ENCODE measurements at regions of chr9 and their contacts with region 1.

Region 1: DNA sequence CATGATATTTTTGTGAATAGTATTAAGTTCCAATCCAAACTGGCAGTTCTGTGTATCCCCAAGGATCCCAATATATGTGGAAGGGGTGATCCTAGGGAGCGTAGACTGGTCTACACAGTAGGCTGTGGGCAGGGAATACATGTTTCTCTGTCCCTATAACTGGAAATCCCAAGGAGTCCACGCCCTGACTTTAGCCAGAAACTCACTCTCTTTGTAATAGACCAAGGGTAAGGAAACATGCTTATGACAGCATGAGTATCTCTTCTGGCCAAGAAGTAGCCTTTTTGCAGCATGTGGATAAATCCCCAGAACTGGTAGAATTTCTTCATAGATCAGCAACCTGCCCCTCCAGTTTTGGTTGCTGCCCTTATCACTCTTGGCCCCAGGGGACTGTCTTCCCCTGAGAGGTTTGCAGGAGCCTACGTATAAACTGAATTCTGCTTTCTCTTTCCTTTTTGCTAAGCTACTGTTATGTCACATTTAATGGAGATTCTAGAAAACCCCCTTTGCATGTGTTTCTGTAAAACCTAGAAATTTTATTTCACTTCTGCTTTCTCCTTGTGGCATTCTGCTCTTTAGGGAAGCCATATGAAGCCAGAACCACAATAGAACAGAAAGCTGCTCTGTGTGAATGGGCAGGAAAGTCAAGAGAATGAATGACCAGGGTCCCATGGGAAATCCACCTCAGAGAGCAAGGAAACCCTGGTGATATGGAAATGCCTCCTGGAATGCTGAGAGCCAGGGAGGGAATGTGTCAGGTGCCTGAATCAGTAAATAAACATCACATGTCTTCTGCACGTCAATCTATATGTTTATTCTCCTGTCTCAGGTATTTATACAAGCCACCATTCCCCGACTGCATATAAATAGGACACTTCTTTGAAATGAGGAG is 3.5 kb downstream of the IFNA2 start:
- DNase-seq: no peak
- ATAC-seq: no peak

Region 2: GRCh38 chr9:21455320-21455719 is 73.6 kb after region 1 on chr9:
- intact Hi-C with region 1: no loop called
- DNase-seq: no peak
- ATAC-seq: no peak

Region 3: GRCh38 chr9:21585756-21586752 is 204.4 kb after region 1 on chr9:
- intact Hi-C with region 1: no loop called
- DNase-seq: no peak
- ATAC-seq: no peak

Region 4: GRCh38 chr9:22203371-22204138 is 821.9 kb after region 1 on chr9:
- intact Hi-C with region 1: loop called (anchors 5 kb)
- DNase-seq: no peak
- ATAC-seq: no peak

Measured in left ventricle myocardium superior (tissue), 1 donor.